Cardiac septum (tissue), 1 donor: ENCODE measurements at regions of chr4 and their contacts with region 1.

Region 1: DNA sequence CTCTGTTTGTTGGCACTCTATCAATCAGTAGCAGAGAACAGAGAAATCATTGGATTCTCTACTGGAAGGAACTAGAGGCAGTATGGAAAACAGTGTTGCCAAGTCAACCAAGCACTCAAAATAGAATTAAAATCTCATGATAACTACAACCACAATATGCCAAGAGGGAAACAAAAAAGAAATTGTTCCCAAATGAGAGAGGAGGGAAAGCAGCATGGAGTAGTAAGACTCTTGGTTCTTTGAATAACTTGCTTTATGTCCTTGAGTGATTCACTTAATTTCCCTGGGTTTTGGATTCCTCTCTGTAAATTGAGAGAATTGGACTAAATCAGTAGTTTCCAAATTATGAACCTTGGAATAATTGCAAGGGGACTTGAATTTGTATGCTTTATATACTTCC is 285.5 kb upstream of the ANKRD50 start:
- DNase-seq: no peak

Region 2: DNA sequence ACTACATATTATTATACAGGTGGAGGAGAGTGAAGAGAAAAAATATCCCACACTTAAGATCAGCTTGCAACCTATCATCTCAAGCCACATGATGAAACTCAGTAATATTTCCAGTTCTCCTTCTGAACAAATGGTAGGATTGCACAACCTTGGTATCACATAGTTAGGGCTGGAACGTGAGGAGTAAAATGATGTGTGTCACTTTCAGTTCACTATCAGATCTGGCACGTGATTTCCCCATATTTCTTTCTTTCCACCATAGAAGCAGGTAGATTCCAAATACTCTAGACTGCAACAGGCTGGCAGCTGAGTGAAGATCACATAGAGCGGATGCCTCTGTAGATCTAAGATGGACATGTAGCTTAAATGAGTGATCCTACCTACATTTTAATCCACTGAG is 134.9 kb before region 1 on chr4:
- intact Hi-C with region 1: loop called (anchors 10 kb)
- DNase-seq: no peak